HEK293T (cell line): ENCODE measurements at regions of chr14 and their contacts with region 1.

Region 1: DNA sequence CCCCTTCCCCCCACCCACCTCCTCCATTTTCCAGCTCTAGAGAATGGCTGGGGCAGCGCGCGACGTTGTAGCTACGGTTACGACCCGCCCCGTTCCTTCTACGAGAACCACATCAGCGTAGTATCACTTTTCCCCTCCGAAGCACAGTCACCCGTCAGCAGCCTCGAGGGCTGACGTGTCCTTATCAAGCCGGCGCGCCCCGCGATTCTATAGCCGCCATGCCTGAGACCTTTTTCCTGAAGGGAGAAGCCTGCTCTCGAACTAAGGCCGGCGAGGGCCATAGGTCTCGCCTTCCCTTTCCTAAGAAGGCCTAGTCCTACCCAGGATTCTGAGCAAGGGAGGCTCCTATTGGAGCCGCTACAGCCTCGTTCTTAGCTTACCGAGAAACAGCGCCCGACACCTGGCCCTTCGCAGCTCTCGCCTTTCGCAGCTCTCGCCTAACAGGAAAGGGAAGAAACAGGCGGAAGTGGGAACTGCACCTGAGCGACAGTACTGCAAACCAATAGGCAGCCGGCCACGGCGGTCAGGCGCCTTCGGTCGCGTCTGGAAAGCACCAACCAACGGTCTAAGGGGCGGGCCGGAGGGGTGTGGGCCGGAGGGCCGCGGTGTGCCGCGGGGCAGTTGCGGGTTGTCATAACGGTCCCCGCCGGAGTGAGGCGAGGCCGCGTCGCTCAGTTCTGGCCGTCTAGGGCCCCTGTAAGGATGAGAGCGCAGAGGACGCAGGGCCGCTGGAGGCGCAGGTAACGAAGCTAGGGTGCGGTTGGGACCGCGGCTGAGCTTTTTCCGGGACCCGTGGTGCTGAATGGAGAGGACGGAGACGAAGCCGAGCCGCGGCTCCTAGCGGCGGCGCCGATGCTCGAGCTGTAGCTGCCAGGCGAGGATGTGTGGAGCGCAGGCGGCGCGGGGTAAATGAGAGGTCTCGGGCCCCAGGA is at the starts of genes MGAT2 and RPL36AL:
- DNase-seq: peak; percentile 93

Region 2: DNA sequence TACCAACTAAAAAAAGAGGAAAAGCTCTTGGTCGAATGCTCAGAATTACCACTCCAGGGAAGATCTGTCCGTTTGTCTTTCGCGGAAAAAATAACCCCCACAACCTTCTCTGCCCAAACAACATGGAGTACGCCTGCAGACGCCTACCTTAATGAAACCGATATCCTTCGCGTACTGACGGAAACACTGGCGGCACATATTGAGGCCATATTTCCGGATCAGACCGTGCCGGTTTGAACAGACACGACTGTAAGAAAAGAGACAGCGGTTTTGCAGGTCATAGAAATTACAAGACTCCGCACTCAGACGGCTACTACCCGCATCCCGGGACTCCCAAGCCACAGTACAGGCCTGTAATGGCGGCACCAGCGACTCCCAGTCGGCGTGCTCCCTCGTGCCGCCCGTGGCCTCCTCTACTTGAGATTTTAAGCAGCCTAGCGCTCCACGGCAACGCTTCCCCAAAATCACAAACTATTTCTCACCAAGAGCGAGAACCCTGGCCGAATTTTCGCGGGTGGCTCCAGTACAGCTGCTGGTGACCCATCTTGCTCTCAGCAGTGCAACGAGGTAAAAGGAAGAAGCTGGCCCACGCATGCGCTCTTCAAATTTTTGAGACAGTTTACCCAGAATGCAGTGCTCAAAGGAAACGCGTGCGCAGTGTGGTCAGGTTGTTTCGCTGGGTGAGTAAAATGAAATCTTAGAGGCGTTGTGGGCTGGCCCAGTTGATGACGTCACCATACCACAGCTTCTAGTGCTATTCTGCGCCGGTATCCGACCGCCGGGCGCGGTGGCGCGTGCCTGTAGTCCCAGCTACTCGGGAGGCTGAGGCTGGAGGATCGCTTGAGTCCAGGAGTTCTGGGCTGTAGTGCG is 34.4 kb before region 1 on chr14 and contains the start of gene RPS29:
- CTCF ChIA-PET with region 1: interaction called, 6 read pairs
- POLR2A ChIA-PET with region 1: interaction called, 41 read pairs
- DNase-seq: peak; percentile 94

Region 3: GRCh38 chr14:49598485-49599300 is 21.8 kb before region 1 on chr14 and contains the start of gene LRR1:
- CTCF ChIA-PET with region 1: no interaction called
- POLR2A ChIA-PET with region 1: interaction called, 37 read pairs
- DNase-seq: peak; percentile 66

Region 4: DNA sequence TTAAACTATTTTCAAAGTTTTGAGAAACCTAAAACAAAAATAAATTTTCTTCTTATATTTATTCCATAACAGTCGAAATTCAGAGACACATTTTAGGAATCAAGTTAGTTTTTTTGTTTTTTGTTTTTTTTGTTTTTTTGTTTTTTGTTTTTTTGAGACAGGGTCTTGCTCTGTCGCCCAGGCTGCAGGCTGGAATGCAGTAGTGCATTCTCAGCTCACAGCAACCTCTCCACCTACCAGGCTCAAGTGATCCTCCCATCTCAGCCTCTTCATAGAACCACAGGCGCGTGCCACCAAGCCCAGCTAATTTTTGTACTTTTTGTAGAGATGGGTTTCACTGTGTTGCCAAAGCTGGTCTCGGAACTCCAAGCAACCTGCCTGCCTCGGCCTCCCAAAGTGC is 33.1 kb after region 1 on chr14:
- CTCF ChIA-PET with region 1: interaction called, 11 read pairs
- POLR2A ChIA-PET with region 1: interaction called, 4 read pairs
- DNase-seq: no peak

Region 5: GRCh38 chr14:49767562-49768300 is 147.3 kb after region 1 on chr14 and contains the start of gene KLHDC2:
- CTCF ChIA-PET with region 1: no interaction called
- POLR2A ChIA-PET with region 1: interaction called, 28 read pairs
- DNase-seq: peak; percentile 79